CD8-positive, alpha-beta T cell (primary cell): ENCODE measurements at regions of chr12 and their contacts with region 1.

Region 1: GRCh38 chr12:4538207-4539160 is at the start of gene RAD51AP1:
- DNase-seq: peak; percentile 89 to 98 (median 94)
- ATAC-seq: peak; percentile 99
- H3K4me3 ChIP-seq: peak within 1 kb of the TSS; percentile 68 to 97
- H3K4me3 Mint-ChIP-seq: peak within 1 kb of the TSS; percentile 98
- H3K27ac ChIP-seq: peak within 1 kb of the TSS; percentile 85 to 97
- H3K27ac Mint-ChIP-seq: peak within 1 kb of the TSS; percentile 98
- H3K4me1 ChIP-seq: peaks cover 7% of the 10 kb centered on the region
- H3K4me1 Mint-ChIP-seq: peaks cover 26% of the 10 kb centered on the region
- H3K27me3 ChIP-seq: no peaks in the 10 kb centered on the region
- H3K27me3 Mint-ChIP-seq: no peaks in the 10 kb centered on the region
- CTCF ChIP-seq: no peak
- total RNA-seq, gene RAD51AP1: 0.87 to 1.6 TPM

Region 2: GRCh38 chr12:3596703-3597415 is 941.6 kb before region 1 on chr12:
- CTCF ChIA-PET with region 1: no interaction called
- POLR2A ChIA-PET with region 1: no interaction called
- intact Hi-C with region 1: no loop called
- DNase-seq: no peak
- ATAC-seq: no peak
- H3K4me3 ChIP-seq: no peak overlapping the region
- H3K4me3 Mint-ChIP-seq: no peak overlapping the region
- H3K27ac ChIP-seq: no peak overlapping the region
- H3K27ac Mint-ChIP-seq: no peak overlapping the region
- H3K4me1 ChIP-seq: no peaks in the 10 kb centered on the region
- H3K4me1 Mint-ChIP-seq: no peaks in the 10 kb centered on the region
- H3K27me3 ChIP-seq: no peaks in the 10 kb centered on the region
- H3K27me3 Mint-ChIP-seq: no peaks in the 10 kb centered on the region
- CTCF ChIP-seq: no peak

Region 3: DNA sequence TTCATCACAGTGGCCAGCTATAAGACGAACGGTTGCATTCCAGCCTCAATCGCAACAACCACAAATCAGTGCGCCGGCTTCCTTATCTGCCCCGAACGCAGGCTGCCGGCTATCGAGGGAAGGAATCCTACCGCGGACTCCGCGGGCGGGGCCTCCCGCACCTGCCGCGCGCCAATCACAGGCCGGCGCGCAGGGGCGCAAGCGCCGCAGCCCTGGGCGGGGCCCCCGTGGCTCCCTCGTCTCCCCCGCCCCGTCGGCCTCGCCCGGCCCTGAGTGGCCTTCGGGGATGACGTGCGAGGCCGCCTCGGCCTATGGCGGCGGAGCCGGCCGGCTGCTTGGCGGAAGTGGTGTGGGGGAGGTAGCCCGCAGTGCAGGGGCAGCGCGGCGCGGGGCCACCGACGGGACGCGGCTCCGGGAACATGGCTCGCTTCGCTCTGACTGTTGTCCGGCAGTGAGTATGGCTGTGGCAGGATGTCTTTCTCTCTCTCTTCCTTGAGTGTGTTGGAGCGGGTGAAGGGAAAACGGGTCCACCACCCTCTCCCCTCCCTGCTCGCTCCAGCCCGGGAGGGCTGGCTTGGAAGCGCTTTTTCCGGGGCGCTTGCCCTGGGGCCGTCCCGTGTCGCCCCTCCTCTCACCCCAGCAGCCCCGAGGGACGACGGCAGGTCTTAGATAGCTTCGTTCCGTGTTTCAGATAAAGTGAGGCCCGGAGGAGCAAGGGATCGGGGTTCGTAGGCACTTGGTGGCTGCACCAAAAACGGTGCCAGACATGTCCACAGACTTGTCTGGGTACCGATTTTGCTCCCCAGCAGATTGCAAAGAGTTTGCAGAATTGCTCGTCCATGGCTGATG is 217.4 kb before region 1 on chr12 and contains the start of gene TIGAR:
- CTCF ChIA-PET with region 1: no interaction called
- POLR2A ChIA-PET with region 1: no interaction called
- intact Hi-C with region 1: loop called (anchors 1 kb)
- DNase-seq: peak; percentile 79 to 97 (median 90)
- ATAC-seq: peak; percentile 96
- H3K4me3 ChIP-seq: peak within 1 kb of the TSS; percentile 86 to 89
- H3K4me3 Mint-ChIP-seq: peak within 1 kb of the TSS; percentile 96
- H3K27ac ChIP-seq: peak within 1 kb of the TSS; percentile 81 to 83
- H3K27ac Mint-ChIP-seq: peak within 1 kb of the TSS; percentile 95
- H3K4me1 ChIP-seq: peaks cover 25% of the 10 kb centered on the region
- H3K4me1 Mint-ChIP-seq: peaks cover 40% of the 10 kb centered on the region
- H3K27me3 ChIP-seq: no peaks in the 10 kb centered on the region
- H3K27me3 Mint-ChIP-seq: no peaks in the 10 kb centered on the region
- CTCF ChIP-seq: no peak
- total RNA-seq, gene TIGAR: 14.0 to 15.8 TPM

Region 4: GRCh38 chr12:4486980-4487379 is 51.5 kb before region 1 on chr12:
- CTCF ChIA-PET with region 1: no interaction called
- POLR2A ChIA-PET with region 1: no interaction called
- intact Hi-C with region 1: no loop called
- DNase-seq: no peak
- ATAC-seq: no peak
- H3K4me3 ChIP-seq: no peak overlapping the region
- H3K4me3 Mint-ChIP-seq: no peak overlapping the region
- H3K27ac ChIP-seq: no peak overlapping the region
- H3K27ac Mint-ChIP-seq: no peak overlapping the region
- H3K4me1 ChIP-seq: no peaks in the 10 kb centered on the region
- H3K4me1 Mint-ChIP-seq: no peaks in the 10 kb centered on the region
- H3K27me3 ChIP-seq: no peaks in the 10 kb centered on the region
- H3K27me3 Mint-ChIP-seq: no peaks in the 10 kb centered on the region
- CTCF ChIP-seq: no peak

Region 5: GRCh38 chr12:4506870-4507269 is 31.6 kb before region 1 on chr12:
- CTCF ChIA-PET with region 1: no interaction called
- POLR2A ChIA-PET with region 1: no interaction called
- intact Hi-C with region 1: loop called in 1 of 2 experiments (anchors 2 kb)
- DNase-seq: peak in 2 of 9 experiments; percentile 56 to 77
- ATAC-seq: peak; percentile 98
- H3K4me3 ChIP-seq: no peak overlapping the region
- H3K4me3 Mint-ChIP-seq: peak overlapping the region; percentile 38
- H3K27ac ChIP-seq: peak overlapping the region; percentile 0 to 16
- H3K27ac Mint-ChIP-seq: peak overlapping the region; percentile 85
- H3K4me1 ChIP-seq: peaks cover 16% of the 10 kb centered on the region
- H3K4me1 Mint-ChIP-seq: peaks cover 27% of the 10 kb centered on the region
- H3K27me3 ChIP-seq: no peaks in the 10 kb centered on the region
- H3K27me3 Mint-ChIP-seq: no peaks in the 10 kb centered on the region
- CTCF ChIP-seq: no peak